ENCODE measurements at regions of chr1 and their contacts with region 1.

Region 1: DNA sequence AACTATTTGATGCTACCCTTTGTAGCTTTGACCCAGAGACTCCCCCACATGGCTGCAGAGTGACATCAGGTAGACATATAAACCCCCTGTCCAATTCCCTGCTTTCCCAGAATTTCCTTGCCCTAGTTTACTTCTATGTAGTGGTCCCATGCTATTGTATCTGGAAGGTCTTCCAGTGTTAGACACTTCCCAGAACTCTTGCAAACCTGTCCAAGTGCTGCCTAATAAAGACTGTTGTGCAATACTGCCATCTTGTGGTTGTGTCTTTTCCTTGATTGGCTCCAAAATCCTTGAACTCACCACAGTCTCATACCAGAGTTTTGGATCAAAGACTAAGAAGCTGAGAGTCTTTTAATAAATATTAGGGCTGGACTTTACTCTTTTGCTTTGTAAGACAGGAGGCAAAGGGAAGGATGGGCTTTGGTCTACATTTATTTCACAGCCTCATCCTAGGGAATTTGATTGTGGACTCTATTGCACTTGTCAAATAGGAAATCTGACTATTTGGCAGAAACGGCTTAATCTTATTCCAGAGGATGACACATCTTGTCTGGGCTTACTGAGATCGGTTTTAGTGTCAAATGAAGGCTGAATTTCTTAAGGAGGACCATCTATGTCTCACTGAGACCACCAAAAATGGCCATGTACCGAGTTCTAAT is 169.9 kb downstream of the LRRC7 start:
- DNase-seq: peak; percentile 61
- H3K4me3 ChIP-seq: no peak overlapping the region
- H3K27ac ChIP-seq: no peak overlapping the region
- H3K4me1 ChIP-seq: no peaks in the 10 kb centered on the region
- CTCF ChIP-seq: peak; percentile 89

Region 2: GRCh38 chr1:68459796-68460195 is 1277.9 kb before region 1 on chr1:
- CTCF ChIA-PET with region 1: no interaction called
- POLR2A ChIA-PET with region 1: no interaction called
- intact Hi-C with region 1: loop called (anchors 10 kb)
- DNase-seq: no peak
- H3K4me3 ChIP-seq: no peak overlapping the region
- H3K27ac ChIP-seq: no peak overlapping the region
- H3K4me1 ChIP-seq: no peaks in the 10 kb centered on the region
- CTCF ChIP-seq: no peak

Region 3: DNA sequence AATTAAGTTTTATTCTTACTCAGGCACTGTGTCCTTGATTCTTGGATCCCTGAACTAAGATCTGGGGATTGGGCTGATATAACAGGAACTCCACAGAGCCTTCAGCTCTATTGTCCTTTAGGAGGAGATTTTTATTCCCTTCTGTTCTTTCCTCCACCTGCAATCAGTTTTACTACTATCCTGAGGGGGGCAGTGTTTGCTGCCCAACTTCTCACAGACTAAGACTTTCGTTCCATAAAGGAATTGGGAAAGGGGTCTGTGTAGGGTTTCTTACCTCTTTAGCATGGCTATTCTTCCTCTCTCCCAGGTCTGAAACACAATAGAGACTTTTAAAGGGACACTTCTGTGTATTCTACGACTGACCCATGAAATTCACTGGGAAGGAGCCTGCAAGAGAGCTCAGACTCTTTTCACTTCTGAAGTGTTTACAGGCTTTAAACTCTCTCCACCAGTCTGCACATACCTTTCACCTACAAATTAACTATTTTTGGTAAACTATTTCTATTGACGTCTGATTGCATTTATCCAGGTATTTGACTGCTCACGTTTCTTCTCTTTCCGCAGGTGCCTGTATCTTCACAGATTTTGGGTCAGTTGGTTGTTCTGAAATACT is 1137.5 kb before region 1 on chr1:
- CTCF ChIA-PET with region 1: no interaction called
- POLR2A ChIA-PET with region 1: no interaction called
- intact Hi-C with region 1: loop called (anchors 1 kb)
- DNase-seq: peak; percentile 7
- H3K4me3 ChIP-seq: no peak overlapping the region
- H3K27ac ChIP-seq: no peak overlapping the region
- H3K4me1 ChIP-seq: no peaks in the 10 kb centered on the region
- CTCF ChIP-seq: peak; percentile 76

Region 4: GRCh38 chr1:69777971-69778370 is 40.3 kb after region 1 on chr1:
- CTCF ChIA-PET with region 1: no interaction called
- POLR2A ChIA-PET with region 1: no interaction called
- intact Hi-C with region 1: no loop called
- DNase-seq: no peak
- H3K4me3 ChIP-seq: no peak overlapping the region
- H3K27ac ChIP-seq: no peak overlapping the region
- H3K4me1 ChIP-seq: no peaks in the 10 kb centered on the region
- CTCF ChIP-seq: no peak

Region 5: GRCh38 chr1:69858534-69858933 is 120.9 kb after region 1 on chr1:
- CTCF ChIA-PET with region 1: no interaction called
- POLR2A ChIA-PET with region 1: no interaction called
- intact Hi-C with region 1: no loop called
- DNase-seq: no peak
- H3K4me3 ChIP-seq: no peak overlapping the region
- H3K27ac ChIP-seq: no peak overlapping the region
- H3K4me1 ChIP-seq: no peaks in the 10 kb centered on the region
- CTCF ChIP-seq: no peak